ENCODE measurements at regions of chr6 and their contacts with region 1.

Region 1: GRCh38 chr6:149028767-149029405 is 282.1 kb downstream of the UST start:
- DNase-seq: no peak
- ATAC-seq: peak; percentile 67 to 84 (median 70)
- H3K4me3 ChIP-seq: no peak overlapping the region
- H3K27ac ChIP-seq: no peak overlapping the region
- H3K4me1 ChIP-seq: no peaks in the 10 kb centered on the region
- H3K27me3 ChIP-seq: no peaks in the 10 kb centered on the region
- CTCF ChIP-seq: peak; percentile 77

Region 2: GRCh38 chr6:148720406-148720805 is 308.5 kb before region 1 on chr6:
- intact Hi-C with region 1: no loop called
- DNase-seq: no peak
- ATAC-seq: no peak
- H3K4me3 ChIP-seq: no peak overlapping the region
- H3K27ac ChIP-seq: no peak overlapping the region
- H3K4me1 ChIP-seq: no peaks in the 10 kb centered on the region
- H3K27me3 ChIP-seq: no peaks in the 10 kb centered on the region
- CTCF ChIP-seq: no peak

Region 3: GRCh38 chr6:148898376-148899014 is 130.4 kb before region 1 on chr6:
- intact Hi-C with region 1: no loop called
- DNase-seq: no peak
- ATAC-seq: no peak
- H3K4me3 ChIP-seq: no peak overlapping the region
- H3K27ac ChIP-seq: no peak overlapping the region
- H3K4me1 ChIP-seq: no peaks in the 10 kb centered on the region
- H3K27me3 ChIP-seq: no peaks in the 10 kb centered on the region
- CTCF ChIP-seq: no peak

Region 4: DNA sequence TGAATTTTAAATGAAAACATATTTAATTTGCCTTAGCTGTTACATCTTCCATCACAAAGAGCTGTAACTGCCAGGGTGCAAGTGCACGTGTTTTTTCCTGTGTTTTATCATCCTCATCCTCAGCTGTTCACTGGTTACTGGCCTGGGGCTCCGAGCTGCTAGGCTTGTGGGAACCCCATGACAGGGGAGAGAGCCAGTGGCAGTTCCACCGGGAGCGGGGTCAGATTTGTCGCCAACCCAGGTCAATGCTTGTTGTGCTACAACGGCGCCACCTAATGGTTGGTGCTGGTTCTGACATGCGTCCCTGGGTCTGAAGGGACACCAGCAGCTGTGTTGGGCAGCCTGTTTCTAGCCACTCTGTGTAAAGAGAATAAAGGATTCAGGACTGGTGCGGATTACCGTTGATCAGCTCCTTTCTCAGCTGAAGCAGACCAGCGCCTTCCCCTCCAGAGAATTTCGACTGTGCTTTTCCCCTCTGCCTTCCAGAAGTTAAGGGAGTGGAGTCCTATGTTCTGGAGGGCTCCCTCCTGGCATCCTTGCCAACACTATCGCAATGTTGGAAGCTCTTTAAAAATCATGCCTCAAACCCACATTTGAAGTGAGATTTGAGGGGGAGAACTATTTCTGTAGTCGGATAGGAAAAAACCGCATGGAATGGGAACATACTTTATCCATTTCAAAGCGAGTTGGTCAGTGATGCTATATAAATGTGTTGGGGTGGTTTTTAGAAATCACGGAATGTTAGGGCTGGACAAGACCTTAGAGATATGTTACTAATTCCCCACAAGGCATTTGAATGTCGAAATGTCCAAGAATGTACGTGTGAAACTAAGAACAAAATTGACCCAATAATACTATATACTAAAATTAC is 403.3 kb after region 1 on chr6:
- intact Hi-C with region 1: loop called (anchors 2 to 5 kb)
- DNase-seq: peak; percentile 88 to 93
- ATAC-seq: peak; percentile 93 to 98 (median 96)
- H3K4me3 ChIP-seq: no peak overlapping the region
- H3K27ac ChIP-seq: no peak overlapping the region
- H3K4me1 ChIP-seq: no peaks in the 10 kb centered on the region
- H3K27me3 ChIP-seq: no peaks in the 10 kb centered on the region
- CTCF ChIP-seq: peak; percentile 99

Region 5: DNA sequence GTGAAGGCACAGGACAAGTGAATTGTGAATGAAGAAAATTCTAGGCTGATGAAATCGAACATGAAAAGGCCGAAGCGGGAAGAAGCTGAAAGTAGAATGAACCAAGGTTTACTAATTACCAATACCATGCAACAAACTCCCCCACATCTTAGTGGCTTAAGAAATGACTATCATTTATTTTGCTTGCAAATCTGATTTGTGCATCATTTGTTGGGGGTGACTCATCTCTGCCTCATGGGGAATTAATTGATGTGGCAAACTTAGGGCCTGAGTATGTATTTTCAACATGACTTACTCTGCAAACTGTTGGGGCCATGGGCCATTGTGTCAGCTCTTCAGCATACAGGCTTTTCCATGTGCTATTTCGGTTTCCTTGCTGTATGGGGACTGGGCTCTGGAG is 1140.7 kb after region 1 on chr6:
- intact Hi-C with region 1: loop called in 1 of 2 experiments (anchors 10 kb)
- DNase-seq: no peak
- ATAC-seq: no peak
- H3K4me3 ChIP-seq: no peak overlapping the region
- H3K27ac ChIP-seq: peak overlapping the region; percentile 54
- H3K4me1 ChIP-seq: peaks cover 31% of the 10 kb centered on the region
- H3K27me3 ChIP-seq: no peaks in the 10 kb centered on the region
- CTCF ChIP-seq: no peak

Measured in psoas muscle (tissue), 8 donors.